ENCODE measurements at regions of chr14 and their contacts with region 1.

Region 1: DNA sequence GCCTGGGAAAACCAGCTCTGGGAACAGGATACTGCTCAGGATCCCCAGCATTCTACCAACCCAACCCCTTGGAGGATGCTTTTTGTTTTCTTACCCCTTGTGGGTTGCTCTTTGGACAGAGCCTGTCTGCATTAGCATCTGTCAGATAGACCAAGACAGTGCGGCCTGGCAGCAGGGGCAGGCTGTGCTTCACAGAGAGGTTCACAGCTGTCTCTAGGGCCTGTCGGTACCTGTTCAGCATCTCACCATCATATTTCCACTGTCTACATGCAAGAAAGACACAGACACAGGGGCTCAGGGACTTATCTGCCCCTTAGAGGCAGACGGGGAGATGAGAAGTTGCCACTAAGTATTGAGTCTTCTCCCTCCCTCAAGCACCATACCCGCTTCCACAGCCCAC is 21.8 kb downstream of the TEP1 start:
- DNase-seq: no peak
- H3K4me3 ChIP-seq: no peak overlapping the region
- H3K27ac ChIP-seq: no peak overlapping the region
- H3K4me1 ChIP-seq: no peaks in the 10 kb centered on the region
- CTCF ChIP-seq: no peak

Region 2: GRCh38 chr14:20356422-20356821 is 35.1 kb before region 1 on chr14:
- CTCF ChIA-PET with region 1: no interaction called
- POLR2A ChIA-PET with region 1: interaction called, 5 read pairs
- intact Hi-C with region 1: loop called (anchors 5 kb)
- DNase-seq: no peak
- H3K4me3 ChIP-seq: no peak overlapping the region
- H3K27ac ChIP-seq: no peak overlapping the region
- H3K4me1 ChIP-seq: no peaks in the 10 kb centered on the region
- CTCF ChIP-seq: no peak

Region 3: DNA sequence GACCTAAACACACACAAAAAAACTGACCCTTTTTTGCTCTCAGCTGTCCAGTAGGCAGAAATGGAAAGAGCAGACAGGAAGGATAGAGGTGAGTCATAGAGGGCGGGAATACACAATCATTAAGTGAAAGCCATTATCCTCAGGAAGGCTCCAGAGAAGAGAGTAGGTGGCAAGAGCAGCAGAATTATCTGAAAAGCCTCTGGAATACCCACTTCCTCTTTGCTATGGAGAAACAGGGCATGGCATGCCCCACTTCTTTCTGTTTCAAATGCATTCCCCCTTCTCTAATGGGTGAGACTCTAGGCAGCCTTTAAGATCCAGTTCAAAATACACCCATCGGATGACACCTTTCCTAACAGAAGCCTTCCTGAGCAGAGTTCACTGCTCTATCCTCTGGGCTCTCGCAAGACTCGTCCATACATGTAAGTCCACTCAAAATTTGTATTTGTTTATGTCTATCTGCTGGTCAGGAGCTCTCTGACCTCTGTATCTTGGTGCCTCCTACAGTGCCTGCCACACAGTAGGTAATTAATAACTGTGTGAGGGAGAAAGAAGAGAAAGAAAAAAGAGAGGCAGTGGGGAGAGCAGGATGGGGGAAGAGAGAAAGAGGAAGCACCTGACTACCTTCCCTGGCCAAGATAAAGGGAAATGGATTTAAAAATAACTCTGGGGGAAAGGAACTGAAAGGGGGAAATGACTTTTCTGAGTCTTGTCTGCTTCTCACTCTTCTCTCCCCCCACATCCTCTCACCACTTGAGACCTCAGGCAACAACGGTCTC is 35.9 kb after region 1 on chr14:
- CTCF ChIA-PET with region 1: no interaction called
- POLR2A ChIA-PET with region 1: no interaction called
- intact Hi-C with region 1: no loop called
- DNase-seq: peak; percentile 82
- H3K4me3 ChIP-seq: peak overlapping the region; percentile 54
- H3K27ac ChIP-seq: peak overlapping the region; percentile 94
- H3K4me1 ChIP-seq: peaks cover 55% of the 10 kb centered on the region
- CTCF ChIP-seq: no peak

Measured in OCI-LY7 (cell line).